Activated CD4-positive, alpha-beta memory T cell treated with anti-CD3 and anti-CD28 coated beads, Interleukin-2, amount 10 ng/mL, durations not matched to agents 7 days and 5 days (primary cell): ENCODE measurements at regions of chr12 and their contacts with region 1.

Region 1: DNA sequence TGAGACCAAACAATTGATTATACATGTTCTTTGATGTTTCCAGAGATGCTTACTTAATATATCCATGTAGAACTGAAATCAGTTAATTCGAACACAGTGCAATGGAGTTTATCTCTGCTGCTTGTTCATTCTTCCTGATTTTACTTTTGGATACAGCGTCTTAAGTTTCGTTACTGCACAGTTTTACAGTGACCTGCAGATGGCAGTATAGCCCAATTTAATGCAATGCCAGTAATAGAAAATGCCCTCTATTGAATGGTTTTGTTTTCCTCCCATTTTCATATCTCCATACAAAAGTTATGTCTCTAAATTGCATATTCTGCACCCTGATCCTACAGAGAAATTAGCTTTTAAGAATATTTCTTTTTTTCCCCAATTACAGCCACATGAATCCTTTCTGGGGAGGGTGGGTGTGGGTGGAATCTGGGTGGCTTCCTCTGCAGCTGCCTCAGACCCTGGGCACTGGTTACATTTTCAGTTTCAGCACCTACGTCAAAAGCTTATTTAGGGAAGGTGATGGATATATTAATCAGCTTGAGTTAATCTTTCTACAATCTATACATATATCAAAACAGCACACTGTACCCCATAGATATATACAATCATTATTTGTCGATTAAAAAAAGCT is 101.1 kb upstream of the DCD start:
- DNase-seq: peak; percentile 39
- H3K4me3 Mint-ChIP-seq: peak overlapping the region; percentile 36
- H3K27ac Mint-ChIP-seq: no peak overlapping the region
- H3K4me1 Mint-ChIP-seq: peaks cover 19% of the 10 kb centered on the region
- H3K27me3 Mint-ChIP-seq: no peaks in the 10 kb centered on the region

Region 2: DNA sequence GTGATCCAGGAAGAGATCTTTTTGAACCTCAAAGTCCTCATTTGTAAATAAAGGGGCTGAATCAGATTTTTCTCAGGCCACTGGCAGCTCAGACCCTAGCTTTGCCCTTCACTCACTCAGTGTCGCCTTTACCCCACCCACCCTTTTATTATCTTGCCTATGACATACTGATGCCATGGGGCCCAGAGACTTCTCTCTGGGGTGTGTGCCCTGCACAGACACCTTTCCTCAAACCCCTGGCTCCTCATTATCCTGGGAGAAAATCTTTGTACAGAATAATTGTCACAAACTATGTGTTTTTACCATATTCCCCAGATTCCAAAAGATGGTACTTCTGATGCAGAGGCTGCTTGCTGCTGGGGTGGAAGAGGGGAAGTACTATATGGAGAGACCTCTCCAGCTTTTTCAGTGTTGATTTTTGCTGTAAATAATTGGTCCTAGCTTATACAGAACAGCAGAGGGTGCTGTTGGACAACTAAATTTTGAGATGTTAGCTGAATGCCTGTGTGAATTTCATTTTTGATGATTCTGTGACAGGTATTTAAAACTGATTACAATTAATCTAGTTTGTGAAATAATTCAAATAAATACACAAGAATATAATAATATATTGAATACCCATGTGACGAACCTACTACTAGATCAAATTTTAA is 47.2 kb before region 1 on chr12:
- CTCF ChIA-PET with region 1: interaction called, 23 read pairs
- POLR2A ChIA-PET with region 1: no interaction called
- DNase-seq: no peak
- H3K4me3 Mint-ChIP-seq: no peak overlapping the region
- H3K27ac Mint-ChIP-seq: no peak overlapping the region
- H3K4me1 Mint-ChIP-seq: no peaks in the 10 kb centered on the region
- H3K27me3 Mint-ChIP-seq: peaks cover 11% of the 10 kb centered on the region

Region 3: DNA sequence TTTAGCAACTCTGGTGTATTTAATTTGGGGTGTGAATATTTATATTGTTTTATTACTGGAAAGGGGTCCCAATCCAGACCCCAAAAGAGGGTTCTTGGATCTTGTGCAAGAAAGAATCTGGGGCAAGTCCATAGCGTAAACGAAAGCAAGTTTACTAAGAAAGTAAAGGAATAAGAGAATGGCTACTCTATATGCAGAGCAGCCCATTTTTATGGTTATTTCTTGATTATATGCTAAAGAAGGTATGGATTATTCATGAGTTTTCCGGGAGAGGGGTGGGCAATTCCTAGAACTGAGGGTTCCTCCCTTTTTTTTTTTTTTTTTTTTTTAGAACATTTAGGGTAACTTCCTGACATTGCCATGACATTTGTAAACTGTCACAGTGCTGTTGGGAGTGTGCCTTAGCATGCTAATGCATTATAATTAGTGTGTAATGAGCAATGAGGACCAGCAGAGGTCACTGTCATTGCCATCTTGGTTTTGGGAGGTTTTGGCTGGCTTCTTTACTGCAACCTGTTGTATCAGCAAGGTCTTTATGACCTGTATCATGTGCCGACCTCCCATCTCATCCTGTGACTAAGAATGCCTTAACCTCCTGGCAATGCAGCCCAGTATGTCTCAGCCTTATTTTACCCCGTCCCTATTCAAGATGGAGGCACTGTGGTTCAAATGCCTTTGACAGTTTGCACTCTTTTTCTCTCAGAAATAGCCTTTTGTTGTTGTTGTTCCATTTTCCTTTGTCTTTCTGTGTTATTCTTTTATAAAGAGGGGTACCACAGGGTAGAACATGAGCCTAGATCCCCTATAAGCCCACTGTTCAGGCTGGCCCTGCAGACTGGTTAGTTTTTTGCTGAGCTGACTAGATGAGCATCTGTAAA is 25.7 kb before region 1 on chr12:
- CTCF ChIA-PET with region 1: interaction called, 28 read pairs
- POLR2A ChIA-PET with region 1: interaction called, 4 read pairs
- DNase-seq: peak; percentile 42
- H3K4me3 Mint-ChIP-seq: no peak overlapping the region
- H3K27ac Mint-ChIP-seq: no peak overlapping the region
- H3K4me1 Mint-ChIP-seq: peaks cover 9% of the 10 kb centered on the region
- H3K27me3 Mint-ChIP-seq: peaks cover 25% of the 10 kb centered on the region

Region 4: GRCh38 chr12:54759751-54760150 is 10.4 kb after region 1 on chr12:
- CTCF ChIA-PET with region 1: interaction called, 25 read pairs
- POLR2A ChIA-PET with region 1: no interaction called
- DNase-seq: peak; percentile 24
- H3K4me3 Mint-ChIP-seq: no peak overlapping the region
- H3K27ac Mint-ChIP-seq: no peak overlapping the region
- H3K4me1 Mint-ChIP-seq: peaks cover 11% of the 10 kb centered on the region
- H3K27me3 Mint-ChIP-seq: peaks cover 6% of the 10 kb centered on the region

Region 5: DNA sequence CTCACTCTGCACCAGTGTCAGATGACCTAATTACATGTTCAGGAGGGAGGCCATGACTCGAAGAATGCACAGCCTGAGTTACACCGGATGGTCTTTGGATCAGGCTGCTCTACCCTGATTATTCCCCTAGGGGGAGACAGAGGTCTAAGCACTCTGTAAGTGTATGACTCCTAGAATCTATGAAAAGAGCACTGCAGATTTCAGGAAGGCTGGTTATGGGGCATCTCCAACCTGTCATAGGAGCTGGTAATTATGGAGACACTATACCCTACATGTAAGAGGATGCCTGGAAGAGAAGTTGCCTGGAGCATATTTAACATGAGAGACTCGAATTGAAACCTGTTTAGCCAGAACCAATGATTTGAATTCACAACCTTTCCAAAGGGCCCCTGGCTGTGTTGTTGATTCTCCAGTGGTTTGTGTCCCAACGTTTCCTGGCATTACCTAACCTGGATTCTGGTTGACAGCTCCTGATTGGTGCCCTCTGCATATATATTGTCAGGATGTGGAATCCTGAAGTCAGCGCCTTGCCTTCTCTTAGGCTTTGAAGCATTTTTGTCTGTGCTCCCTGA is 104.8 kb after region 1 on chr12 and contains the start of gene MUCL1:
- CTCF ChIA-PET with region 1: interaction called, 10 read pairs
- POLR2A ChIA-PET with region 1: no interaction called
- DNase-seq: peak; percentile 76
- H3K4me3 Mint-ChIP-seq: no peak within 1 kb of the TSS
- H3K27ac Mint-ChIP-seq: no peak within 1 kb of the TSS
- H3K4me1 Mint-ChIP-seq: peaks cover 10% of the 10 kb centered on the region
- H3K27me3 Mint-ChIP-seq: peaks cover 7% of the 10 kb centered on the region
- total RNA-seq, gene MUCL1: not detected